Endothelial cell of umbilical vein (primary cell): ENCODE measurements at regions of chr1 and their contacts with region 1.

Region 1: GRCh38 chr1:23496490-23497181 is 12.7 kb upstream of the ASAP3 start:
- DNase-seq: no peak
- H3K4me3 ChIP-seq: no peak overlapping the region
- H3K27ac ChIP-seq: no peak overlapping the region
- H3K4me1 ChIP-seq: no peaks in the 10 kb centered on the region
- H3K27me3 ChIP-seq: no peaks in the 10 kb centered on the region
- CTCF ChIP-seq: no peak
- POLR2A ChIP-seq: no peak

Region 2: DNA sequence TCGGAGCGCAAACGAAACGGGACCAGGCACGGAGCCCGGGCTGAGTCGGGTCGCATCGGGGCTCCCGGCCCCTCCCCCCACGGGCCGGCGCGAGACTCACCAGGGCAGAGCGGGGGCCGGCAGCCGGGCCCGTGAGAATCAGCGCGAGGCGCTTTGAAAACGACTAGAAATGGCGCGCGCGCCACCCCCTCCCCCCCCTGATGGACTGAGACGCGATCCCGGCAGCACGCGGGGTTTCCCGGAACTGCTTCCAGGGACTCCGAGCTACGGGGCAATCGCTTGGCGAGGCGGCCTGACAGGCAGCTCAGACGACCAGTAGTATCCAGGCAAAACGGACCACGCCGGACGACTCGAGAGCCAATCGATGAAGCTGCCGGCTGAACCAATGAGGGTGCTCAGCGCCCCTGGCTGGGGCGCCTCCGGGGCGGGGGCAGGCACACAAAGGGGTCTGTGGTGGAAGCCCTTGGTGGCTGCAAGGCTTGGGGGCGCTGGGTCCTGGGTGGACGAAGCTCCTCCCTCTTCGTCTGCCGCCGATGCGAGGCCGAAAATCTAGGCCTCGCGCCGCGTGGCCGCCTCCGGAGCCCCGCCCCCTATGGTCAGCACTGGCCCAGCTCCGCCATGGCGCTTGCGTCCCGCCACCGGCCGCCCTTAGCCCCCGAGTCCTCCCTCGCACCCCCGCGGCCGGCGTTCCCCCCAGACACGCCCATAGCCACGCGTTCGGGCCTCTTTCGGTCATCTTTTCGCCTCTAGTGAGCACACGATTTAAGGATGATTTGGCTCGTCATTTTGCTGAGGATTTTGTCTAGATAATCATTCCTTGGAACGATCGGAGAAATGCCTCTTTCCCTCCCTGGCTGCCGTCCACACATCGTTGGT is 152.3 kb before region 1 on chr1 and contains the start of gene HNRNPR:
- CTCF ChIA-PET with region 1: interaction called, 10 read pairs
- POLR2A ChIA-PET with region 1: no interaction called
- dilution Hi-C with region 1: no loop called
- intact Hi-C with region 1: no loop called
- DNase-seq: peak; percentile 100
- H3K4me3 ChIP-seq: peak within 1 kb of the TSS; percentile 73 to 99 (median 99)
- H3K27ac ChIP-seq: peak within 1 kb of the TSS; percentile 79
- H3K4me1 ChIP-seq: peaks cover 27% of the 10 kb centered on the region
- H3K27me3 ChIP-seq: no peaks in the 10 kb centered on the region
- CTCF ChIP-seq: no peak
- POLR2A ChIP-seq: peak; percentile 87
- total RNA-seq, gene HNRNPR: 165 and 171 TPM in 2 replicates

Region 3: GRCh38 chr1:23484253-23485001 is 12.2 kb before region 1 on chr1:
- CTCF ChIA-PET with region 1: interaction called, 77 read pairs
- POLR2A ChIA-PET with region 1: interaction called, 4 read pairs
- dilution Hi-C with region 1: no loop called
- intact Hi-C with region 1: no loop called
- DNase-seq: peak; percentile 92
- H3K4me3 ChIP-seq: peak overlapping the region; percentile 8 to 67 (median 34)
- H3K27ac ChIP-seq: no peak overlapping the region
- H3K4me1 ChIP-seq: peaks cover 11% of the 10 kb centered on the region
- H3K27me3 ChIP-seq: peaks cover 0 to 1% of the 10 kb centered on the region in 2 experiments
- CTCF ChIP-seq: no peak
- POLR2A ChIP-seq: no peak

Region 4: DNA sequence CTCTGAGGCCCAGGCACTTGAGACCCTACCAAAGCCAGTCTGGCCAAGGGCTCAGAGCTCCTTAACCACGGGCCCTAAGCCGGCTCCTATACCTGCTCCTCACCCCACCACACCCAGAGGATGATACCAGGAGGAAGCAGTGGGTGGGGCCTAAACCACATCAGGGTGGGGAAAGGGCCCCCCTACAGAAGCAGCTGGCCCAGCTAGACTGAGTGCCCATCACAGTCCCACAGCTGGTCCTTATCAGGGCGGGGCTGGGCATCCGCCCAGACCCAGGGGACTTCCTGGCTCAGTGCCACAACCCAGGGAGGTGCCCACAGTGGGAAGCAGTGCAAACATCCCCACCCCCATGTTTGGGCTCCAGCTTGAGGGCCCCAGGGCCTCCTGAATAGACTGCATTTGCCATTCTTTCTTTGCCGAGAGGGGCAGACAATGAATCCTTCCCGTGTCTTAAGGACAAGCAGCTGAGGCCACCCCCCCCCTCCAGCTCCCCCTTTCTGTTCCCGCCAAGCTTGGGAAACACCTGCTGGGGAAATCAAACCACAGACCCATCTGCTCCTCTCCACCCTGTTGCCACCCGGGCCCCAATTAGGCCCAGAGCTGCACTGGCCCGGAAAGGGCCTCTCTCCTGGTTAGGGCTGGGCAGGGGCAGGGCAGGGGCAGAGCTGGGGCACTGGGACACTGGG is 28.2 kb after region 1 on chr1:
- CTCF ChIA-PET with region 1: interaction called, 192 read pairs
- POLR2A ChIA-PET with region 1: no interaction called
- dilution Hi-C with region 1: no loop called
- intact Hi-C with region 1: no loop called
- DNase-seq: no peak
- H3K4me3 ChIP-seq: no peak overlapping the region
- H3K27ac ChIP-seq: no peak overlapping the region
- H3K4me1 ChIP-seq: peaks cover 21% of the 10 kb centered on the region
- H3K27me3 ChIP-seq: no peaks in the 10 kb centered on the region
- CTCF ChIP-seq: no peak
- POLR2A ChIP-seq: no peak

Region 5: GRCh38 chr1:23577056-23578004 is 80.7 kb after region 1 on chr1:
- CTCF ChIA-PET with region 1: interaction called, 10 read pairs
- POLR2A ChIA-PET with region 1: no interaction called
- dilution Hi-C with region 1: no loop called
- intact Hi-C with region 1: no loop called
- DNase-seq: peak; percentile 74
- H3K4me3 ChIP-seq: no peak overlapping the region
- H3K27ac ChIP-seq: peak overlapping the region; percentile 60
- H3K4me1 ChIP-seq: peaks cover 18% of the 10 kb centered on the region
- H3K27me3 ChIP-seq: no peaks in the 10 kb centered on the region
- CTCF ChIP-seq: no peak
- POLR2A ChIP-seq: no peak

Region 6: GRCh38 chr1:23664837-23665795 is 168.5 kb after region 1 on chr1:
- CTCF ChIA-PET with region 1: interaction called, 13 read pairs
- POLR2A ChIA-PET with region 1: interaction called, 7 read pairs
- dilution Hi-C with region 1: no loop called
- intact Hi-C with region 1: loop called (anchors 1 kb)
- DNase-seq: peak; percentile 39
- H3K4me3 ChIP-seq: no peak overlapping the region
- H3K27ac ChIP-seq: no peak overlapping the region
- H3K4me1 ChIP-seq: no peaks in the 10 kb centered on the region
- H3K27me3 ChIP-seq: no peaks in the 10 kb centered on the region
- CTCF ChIP-seq: peak; percentile 23 to 30
- POLR2A ChIP-seq: no peak